MCF 10A (cell line): ENCODE measurements at regions of chr18 and their contacts with region 1.

Region 1: DNA sequence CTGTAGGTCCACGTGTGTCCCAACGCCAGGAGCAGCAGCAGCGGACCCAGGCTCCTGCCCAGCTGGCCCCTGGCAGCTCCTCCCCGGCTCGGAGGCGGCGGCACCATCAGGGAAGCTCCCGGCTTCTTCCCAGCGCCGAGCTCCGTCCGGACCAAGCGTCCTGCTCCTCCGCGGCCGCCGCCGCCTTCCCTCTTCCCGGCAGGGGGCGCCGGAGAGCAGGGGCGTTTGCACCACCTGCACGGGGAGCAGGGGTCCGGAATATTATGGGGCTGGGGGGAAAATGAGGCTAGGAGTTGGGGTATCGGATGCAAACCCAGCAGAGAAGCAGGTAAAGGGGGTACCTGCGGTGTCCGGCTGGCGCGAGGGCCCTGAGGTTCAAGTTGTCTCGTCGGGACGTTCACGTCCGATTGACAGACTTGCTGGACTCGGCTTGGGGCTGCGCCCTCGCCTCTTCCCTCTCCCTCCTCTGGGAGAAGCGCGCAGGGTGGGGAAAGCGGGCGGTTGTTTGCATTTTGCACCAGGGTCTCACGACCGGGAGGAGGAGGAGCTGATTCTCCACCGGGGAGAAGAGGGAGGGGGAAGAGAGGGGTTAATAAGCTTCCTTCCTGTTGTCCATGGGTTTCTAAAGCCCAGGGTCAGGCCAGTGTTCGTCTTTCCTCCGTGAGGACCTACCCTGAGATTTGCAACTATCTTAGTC is at the start of gene CCBE1:
- DNase-seq: peak; percentile 85
- H3K4me3 Mint-ChIP-seq: peak within 1 kb of the TSS; percentile 73
- H3K27ac Mint-ChIP-seq: peak within 1 kb of the TSS; percentile 69
- H3K4me1 Mint-ChIP-seq: peaks cover 36% of the 10 kb centered on the region
- H3K27me3 Mint-ChIP-seq: no peaks in the 10 kb centered on the region
- CTCF ChIP-seq: peak; percentile 99
- total RNA-seq, gene CCBE1: 23.8 and 28.9 TPM in 2 replicates

Region 2: DNA sequence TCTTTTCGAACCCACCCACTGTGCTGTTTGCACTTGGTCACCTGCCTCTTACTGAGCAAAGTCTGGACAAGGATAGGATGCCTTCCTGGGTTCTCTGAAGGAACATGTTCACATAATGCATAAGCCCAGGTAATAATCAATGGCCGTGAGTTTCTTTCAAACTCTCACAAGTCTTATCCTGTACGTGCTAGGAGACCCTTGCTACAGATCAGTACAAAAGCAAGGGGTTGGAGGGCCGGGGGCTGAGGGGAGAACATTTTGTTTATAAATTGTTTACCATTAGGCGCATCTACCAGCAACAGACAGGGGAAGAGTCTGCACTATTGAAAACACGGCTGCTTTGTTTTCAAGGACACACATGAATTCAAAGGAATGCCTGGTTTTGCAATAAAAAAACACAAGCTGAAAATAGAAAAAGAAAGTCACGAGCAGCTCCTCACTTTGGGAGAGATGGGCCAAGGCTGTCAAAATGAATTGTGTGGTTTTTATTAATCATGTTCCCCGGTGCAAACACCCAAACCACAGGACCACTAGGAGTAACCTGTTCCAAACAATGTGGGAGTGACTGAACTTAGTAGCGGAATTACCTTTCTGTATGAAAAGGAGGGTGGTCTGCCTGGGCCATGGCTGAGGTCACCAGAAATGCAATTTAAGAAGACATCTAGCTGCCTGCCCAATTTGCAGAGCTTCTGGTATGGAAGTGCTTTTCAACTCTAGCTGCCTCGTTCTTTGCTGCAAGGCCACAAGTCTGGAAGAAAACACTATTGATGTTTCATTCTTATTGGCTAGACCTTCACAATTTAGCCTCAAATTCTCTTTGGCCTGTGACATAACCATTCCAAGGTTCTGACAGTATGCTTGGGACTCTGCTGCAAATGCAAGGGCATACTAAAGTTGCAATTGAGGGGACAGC is 73.7 kb before region 1 on chr18:
- CTCF ChIA-PET with region 1: interaction called, 12 read pairs
- POLR2A ChIA-PET with region 1: interaction called, 3 read pairs
- intact Hi-C with region 1: no loop called
- DNase-seq: peak; percentile 86
- H3K4me3 Mint-ChIP-seq: peak overlapping the region; percentile 61
- H3K27ac Mint-ChIP-seq: peak overlapping the region; percentile 67
- H3K4me1 Mint-ChIP-seq: peaks cover 43% of the 10 kb centered on the region
- H3K27me3 Mint-ChIP-seq: peaks cover 4% of the 10 kb centered on the region
- CTCF ChIP-seq: no peak

Region 3: DNA sequence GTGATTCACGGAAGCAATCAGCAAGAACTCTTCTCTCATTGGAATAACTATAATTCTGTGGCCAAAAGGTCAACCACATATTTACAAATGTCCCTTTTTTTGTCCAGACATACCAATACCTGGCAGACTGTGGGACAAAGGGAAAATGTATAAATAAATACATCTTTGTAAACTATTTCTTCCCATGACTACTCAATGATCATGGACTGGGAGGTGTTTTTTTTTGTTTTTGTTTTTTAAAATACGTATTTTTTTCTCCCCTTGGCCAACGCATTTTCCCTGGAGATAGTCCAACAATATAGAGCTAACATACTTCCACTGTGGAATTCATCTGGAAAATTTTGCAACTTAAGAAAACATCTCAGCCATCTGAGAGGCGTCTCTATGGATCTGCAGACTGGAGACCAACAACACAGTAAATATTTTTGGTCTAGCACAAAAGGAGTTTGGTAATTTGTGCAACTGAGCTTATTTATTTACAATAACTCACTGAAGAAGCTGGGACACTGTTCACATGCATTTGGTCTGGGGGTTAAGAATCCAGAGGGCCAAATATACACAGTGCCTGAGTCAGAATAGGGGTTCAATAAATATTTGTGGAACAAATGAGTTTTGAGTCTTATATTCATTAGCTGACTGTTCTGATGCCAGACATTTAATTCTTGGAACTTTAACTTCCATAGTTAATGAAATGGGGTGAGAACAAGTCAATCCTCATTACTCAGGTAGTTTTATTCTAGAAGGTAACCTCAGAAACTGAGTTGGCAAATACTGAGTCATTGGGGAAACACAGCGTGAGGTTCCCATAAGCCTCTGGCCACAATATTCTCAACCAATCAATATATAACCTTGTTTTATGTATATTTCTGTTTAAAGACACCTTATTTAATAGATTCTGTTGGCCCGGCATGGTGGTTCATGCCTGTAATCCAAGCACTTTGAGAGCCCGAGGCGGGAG is 36.3 kb before region 1 on chr18:
- CTCF ChIA-PET with region 1: interaction called, 22 read pairs
- POLR2A ChIA-PET with region 1: interaction called, 3 read pairs
- intact Hi-C with region 1: no loop called
- DNase-seq: peak; percentile 74
- H3K4me3 Mint-ChIP-seq: no peak overlapping the region
- H3K27ac Mint-ChIP-seq: peak overlapping the region; percentile 67
- H3K4me1 Mint-ChIP-seq: peaks cover 16% of the 10 kb centered on the region
- H3K27me3 Mint-ChIP-seq: no peaks in the 10 kb centered on the region
- CTCF ChIP-seq: no peak

Region 4: GRCh38 chr18:59685501-59685900 is 11.9 kb before region 1 on chr18:
- CTCF ChIA-PET with region 1: interaction called, 44 read pairs
- POLR2A ChIA-PET with region 1: interaction called, 5 read pairs
- intact Hi-C with region 1: no loop called
- DNase-seq: no peak
- H3K4me3 Mint-ChIP-seq: no peak overlapping the region
- H3K27ac Mint-ChIP-seq: no peak overlapping the region
- H3K4me1 Mint-ChIP-seq: peaks cover 3% of the 10 kb centered on the region
- H3K27me3 Mint-ChIP-seq: no peaks in the 10 kb centered on the region
- CTCF ChIP-seq: no peak

Region 5: GRCh38 chr18:59725142-59725541 is 27.8 kb after region 1 on chr18:
- CTCF ChIA-PET with region 1: interaction called, 21 read pairs
- POLR2A ChIA-PET with region 1: interaction called, 6 read pairs
- intact Hi-C with region 1: no loop called
- DNase-seq: no peak
- H3K4me3 Mint-ChIP-seq: no peak overlapping the region
- H3K27ac Mint-ChIP-seq: no peak overlapping the region
- H3K4me1 Mint-ChIP-seq: peaks cover 16% of the 10 kb centered on the region
- H3K27me3 Mint-ChIP-seq: no peaks in the 10 kb centered on the region
- CTCF ChIP-seq: no peak

Region 6: GRCh38 chr18:59752666-59753065 is 55.3 kb after region 1 on chr18:
- CTCF ChIA-PET with region 1: interaction called, 21 read pairs
- POLR2A ChIA-PET with region 1: interaction called, 6 read pairs
- intact Hi-C with region 1: no loop called
- DNase-seq: no peak
- H3K4me3 Mint-ChIP-seq: no peak overlapping the region
- H3K27ac Mint-ChIP-seq: peak overlapping the region; percentile 79
- H3K4me1 Mint-ChIP-seq: peaks cover 17% of the 10 kb centered on the region
- H3K27me3 Mint-ChIP-seq: no peaks in the 10 kb centered on the region
- CTCF ChIP-seq: no peak

Region 7: DNA sequence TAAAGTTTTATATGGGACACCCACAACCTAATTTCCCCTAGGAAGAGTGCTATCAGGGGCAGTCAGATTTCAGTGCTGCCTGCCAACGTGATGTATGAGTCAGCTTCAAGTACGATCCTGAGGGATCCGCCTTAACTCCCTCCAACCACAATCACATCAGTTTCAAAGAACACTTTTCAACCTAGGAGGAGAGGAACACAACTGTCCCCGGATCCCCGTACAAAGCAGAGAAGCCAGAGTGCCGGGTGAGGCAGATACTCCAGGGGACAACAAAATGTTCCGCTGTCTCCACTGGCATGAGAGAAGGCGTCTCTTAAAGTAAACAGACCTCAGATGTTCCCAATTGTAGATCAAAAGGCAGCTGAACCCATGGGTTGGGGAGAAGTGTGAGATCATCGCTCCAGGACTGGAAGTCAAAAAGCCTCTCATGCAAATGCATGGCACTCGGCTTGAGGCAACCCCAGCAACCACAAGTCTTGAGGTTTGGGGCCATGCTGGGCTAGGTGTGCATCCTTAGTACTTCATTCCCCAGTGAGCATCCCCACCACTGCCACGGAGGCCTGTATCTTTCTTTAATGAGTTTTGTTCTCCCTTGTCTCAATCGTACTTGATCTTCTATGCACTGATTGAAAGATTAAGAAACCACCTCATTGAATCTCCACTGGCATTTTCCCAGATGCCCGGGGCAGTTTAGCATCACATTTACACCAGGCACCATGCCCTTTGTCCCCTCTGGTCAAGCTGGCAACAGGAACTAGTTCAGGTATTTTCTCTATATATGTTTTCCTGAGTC is 90.8 kb after region 1 on chr18:
- CTCF ChIA-PET with region 1: interaction called, 35 read pairs
- POLR2A ChIA-PET with region 1: no interaction called
- intact Hi-C with region 1: no loop called
- DNase-seq: peak; percentile 74
- H3K4me3 Mint-ChIP-seq: peak overlapping the region; percentile 54
- H3K27ac Mint-ChIP-seq: peak overlapping the region; percentile 76
- H3K4me1 Mint-ChIP-seq: peaks cover 28% of the 10 kb centered on the region
- H3K27me3 Mint-ChIP-seq: no peaks in the 10 kb centered on the region
- CTCF ChIP-seq: no peak